Activated B cell treated with CpG ODN at 0.5 μM for 24 hours (primary cell): ENCODE measurements at regions of chr20 and their contacts with region 1.

Region 1: GRCh38 chr20:23357767-23358591 is 4.0 kb upstream of the GZF1 start:
- DNase-seq: peak; percentile 100
- ATAC-seq: peak; percentile 80
- H3K4me3 Mint-ChIP-seq: peak overlapping the region; percentile 90
- H3K27ac Mint-ChIP-seq: peak overlapping the region; percentile 94
- H3K4me1 Mint-ChIP-seq: peaks cover 30% of the 10 kb centered on the region
- H3K27me3 Mint-ChIP-seq: no peaks in the 10 kb centered on the region
- CTCF ChIP-seq: no peak

Region 2: GRCh38 chr20:23214903-23215302 is 143.1 kb before region 1 on chr20:
- CTCF ChIA-PET with region 1: no interaction called
- POLR2A ChIA-PET with region 1: no interaction called
- intact Hi-C with region 1: no loop called
- DNase-seq: no peak
- ATAC-seq: no peak
- H3K4me3 Mint-ChIP-seq: no peak overlapping the region
- H3K27ac Mint-ChIP-seq: no peak overlapping the region
- H3K4me1 Mint-ChIP-seq: no peaks in the 10 kb centered on the region
- H3K27me3 Mint-ChIP-seq: peaks cover 2% of the 10 kb centered on the region
- CTCF ChIP-seq: no peak

Region 3: DNA sequence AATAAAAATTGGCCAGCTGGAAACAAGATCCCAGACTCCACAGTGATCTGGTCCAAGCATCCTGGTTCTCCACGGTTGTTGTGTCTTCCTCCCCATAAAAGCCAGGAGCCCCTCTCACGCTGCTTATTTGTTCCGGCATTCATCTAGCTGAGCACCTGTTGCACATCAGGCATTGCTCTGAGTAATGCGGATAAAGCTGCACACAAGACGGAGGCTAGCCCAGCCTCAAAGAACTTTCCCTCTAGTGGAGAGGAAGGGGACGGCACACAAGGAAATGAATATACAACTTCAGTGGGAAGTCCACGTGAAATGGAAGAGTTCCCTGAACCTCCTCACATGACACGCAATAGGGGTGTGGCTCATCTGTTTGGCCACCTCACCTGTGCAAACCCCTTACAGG is 37.7 kb before region 1 on chr20:
- CTCF ChIA-PET with region 1: no interaction called
- POLR2A ChIA-PET with region 1: no interaction called
- intact Hi-C with region 1: no loop called
- DNase-seq: no peak
- ATAC-seq: no peak
- H3K4me3 Mint-ChIP-seq: no peak overlapping the region
- H3K27ac Mint-ChIP-seq: no peak overlapping the region
- H3K4me1 Mint-ChIP-seq: no peaks in the 10 kb centered on the region
- H3K27me3 Mint-ChIP-seq: peaks cover 2% of the 10 kb centered on the region
- CTCF ChIP-seq: no peak

Region 4: GRCh38 chr20:23407781-23408464 is 49.9 kb after region 1 on chr20:
- CTCF ChIA-PET with region 1: no interaction called
- POLR2A ChIA-PET with region 1: no interaction called
- intact Hi-C with region 1: loop called (anchors 2 kb)
- DNase-seq: no peak
- ATAC-seq: peak; percentile 97
- H3K4me3 Mint-ChIP-seq: peak overlapping the region; percentile 28
- H3K27ac Mint-ChIP-seq: peak overlapping the region; percentile 79
- H3K4me1 Mint-ChIP-seq: peaks cover 23% of the 10 kb centered on the region
- H3K27me3 Mint-ChIP-seq: no peaks in the 10 kb centered on the region
- CTCF ChIP-seq: no peak

Region 5: GRCh38 chr20:24134284-24134683 is 776.3 kb after region 1 on chr20:
- CTCF ChIA-PET with region 1: no interaction called
- POLR2A ChIA-PET with region 1: no interaction called
- intact Hi-C with region 1: no loop called
- DNase-seq: no peak
- ATAC-seq: no peak
- H3K4me3 Mint-ChIP-seq: no peak overlapping the region
- H3K27ac Mint-ChIP-seq: no peak overlapping the region
- H3K4me1 Mint-ChIP-seq: no peaks in the 10 kb centered on the region
- H3K27me3 Mint-ChIP-seq: no peaks in the 10 kb centered on the region
- CTCF ChIP-seq: no peak